ENCODE measurements at regions of chr3 and their contacts with region 1.

Region 1: GRCh38 chr3:112013058-112013783 is 14.5 kb downstream of the TAGLN3 start:
- DNase-seq: peak; percentile 42 to 68 (median 58)
- H3K4me3 ChIP-seq: no peak overlapping the region
- H3K27ac ChIP-seq: no peak overlapping the region
- H3K4me1 ChIP-seq: peaks cover 3% of the 10 kb centered on the region
- H3K27me3 ChIP-seq: no peaks in the 10 kb centered on the region
- CTCF ChIP-seq: peak; percentile 42 to 55 (median 53)
- EP300 ChIP-seq: no peak
- POLR2A ChIP-seq: no peak

Region 2: DNA sequence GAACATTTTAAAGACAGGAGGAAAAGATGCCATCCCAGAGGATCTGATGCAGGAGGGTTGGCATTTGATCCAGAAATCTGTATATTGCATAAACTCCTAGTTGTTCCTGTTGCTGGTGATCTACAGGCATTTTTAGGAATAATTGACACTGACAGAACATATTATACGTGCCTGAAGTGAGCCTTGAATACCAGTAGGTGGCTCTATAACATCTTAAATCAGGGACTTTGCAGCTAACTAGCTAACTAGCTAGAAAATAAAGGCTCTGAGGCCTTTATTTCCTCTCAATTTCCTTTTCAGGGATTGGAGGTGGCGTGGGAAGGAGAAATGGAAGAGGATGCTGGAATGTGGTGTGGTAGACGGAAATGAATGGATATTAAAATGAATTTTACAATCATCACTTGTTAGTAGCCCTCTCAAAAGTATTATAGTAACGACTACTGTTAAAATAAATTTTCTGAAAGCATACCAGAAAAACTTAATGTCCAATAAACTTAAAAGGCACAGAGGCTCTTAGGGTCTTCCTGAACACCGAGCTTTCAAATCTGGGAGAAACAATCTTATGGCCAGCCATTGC is 344.2 kb before region 1 on chr3:
- intact Hi-C with region 1: loop called in 1 of 4 experiments (anchors 5 kb)
- DNase-seq: no peak
- H3K4me3 ChIP-seq: no peak overlapping the region
- H3K27ac ChIP-seq: no peak overlapping the region
- H3K4me1 ChIP-seq: peaks cover 1% of the 10 kb centered on the region
- H3K27me3 ChIP-seq: no peaks in the 10 kb centered on the region
- CTCF ChIP-seq: peak; percentile 33 to 65 (median 64)
- EP300 ChIP-seq: no peak
- POLR2A ChIP-seq: no peak

Region 3: GRCh38 chr3:111717601-111718000 is 295.6 kb before region 1 on chr3:
- intact Hi-C with region 1: loop called in 1 of 4 experiments (anchors 5 kb)
- DNase-seq: peak; percentile 62 to 86 (median 71)
- H3K4me3 ChIP-seq: no peak overlapping the region
- H3K27ac ChIP-seq: no peak overlapping the region
- H3K4me1 ChIP-seq: no peaks in the 10 kb centered on the region
- H3K27me3 ChIP-seq: no peaks in the 10 kb centered on the region
- CTCF ChIP-seq: peak; percentile 75 to 97 (median 95)
- EP300 ChIP-seq: no peak
- POLR2A ChIP-seq: no peak

Region 4: DNA sequence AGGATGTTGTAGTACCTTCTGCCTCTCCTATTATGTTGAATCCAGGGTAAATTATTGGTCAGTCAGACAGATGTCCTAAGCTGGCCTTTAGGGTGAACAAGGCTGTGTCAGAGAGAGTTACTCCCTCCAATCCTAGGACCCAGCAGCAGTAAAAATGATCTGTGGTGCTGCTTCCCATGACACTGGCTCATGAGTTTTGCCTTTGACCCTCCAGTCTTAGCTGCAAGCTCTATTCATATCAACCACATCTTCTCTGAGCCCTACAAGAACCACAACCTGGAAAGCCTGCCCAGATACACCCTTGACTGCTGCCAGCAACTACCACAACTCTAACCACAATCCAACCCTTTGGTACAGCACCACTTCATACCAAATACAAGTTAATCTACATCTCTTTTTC is 181.4 kb before region 1 on chr3:
- intact Hi-C with region 1: no loop called
- DNase-seq: no peak
- H3K4me3 ChIP-seq: no peak overlapping the region
- H3K27ac ChIP-seq: no peak overlapping the region
- H3K4me1 ChIP-seq: no peaks in the 10 kb centered on the region
- H3K27me3 ChIP-seq: no peaks in the 10 kb centered on the region
- CTCF ChIP-seq: no peak
- EP300 ChIP-seq: no peak
- POLR2A ChIP-seq: no peak

Measured in ovary (tissue), 10 donors.